ENCODE measurements at regions of chr10 and their contacts with region 1.

Region 1: DNA sequence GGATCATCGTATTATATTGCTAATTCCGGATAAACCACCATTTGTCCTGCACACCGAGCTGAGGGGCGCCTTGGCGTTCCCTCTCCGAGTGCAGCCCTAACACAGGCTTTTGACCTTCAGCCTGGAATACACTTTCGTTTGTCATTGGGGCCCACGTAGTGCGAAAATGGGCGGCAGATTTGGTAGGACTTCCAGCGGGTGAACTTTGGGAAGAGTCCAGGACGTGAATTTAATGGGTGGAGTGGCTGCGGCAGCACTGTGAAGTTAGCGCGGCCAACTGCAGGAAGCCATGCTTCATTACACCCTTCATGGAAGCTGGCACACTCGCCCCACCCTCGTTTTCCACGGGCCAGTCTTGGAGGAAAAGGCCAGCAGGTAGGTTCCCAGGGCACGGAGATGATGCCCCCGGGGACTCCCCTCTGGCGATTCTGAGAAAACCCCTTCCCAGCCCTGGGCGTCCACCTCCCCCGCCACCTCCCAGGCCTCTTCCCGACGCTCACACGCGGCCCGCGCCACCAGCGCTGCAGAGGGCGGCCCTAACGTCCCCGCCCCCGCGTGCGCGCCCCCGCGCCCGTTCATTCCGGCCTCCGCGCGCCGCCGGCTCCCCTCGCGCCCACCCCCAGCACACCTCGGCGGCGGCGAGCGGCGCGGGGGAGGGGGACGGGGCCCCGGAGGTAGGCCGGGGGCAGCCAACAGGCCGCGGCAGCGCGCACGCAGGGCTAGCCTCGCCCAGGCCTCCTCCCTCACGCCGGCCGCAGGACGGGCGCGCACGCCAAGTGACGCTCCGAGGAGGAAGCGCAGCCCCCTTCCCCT is at the start of gene MLLT10:
- DNase-seq: peak; percentile 98
- H3K4me3 ChIP-seq: peak within 1 kb of the TSS; percentile 72
- H3K27ac ChIP-seq: peak within 1 kb of the TSS; percentile 70
- H3K4me1 ChIP-seq: peaks cover 24% of the 10 kb centered on the region
- CTCF ChIP-seq: no peak
- total RNA-seq, gene MLLT10: 50.4 and 68.4 TPM in 2 replicates

Region 2: DNA sequence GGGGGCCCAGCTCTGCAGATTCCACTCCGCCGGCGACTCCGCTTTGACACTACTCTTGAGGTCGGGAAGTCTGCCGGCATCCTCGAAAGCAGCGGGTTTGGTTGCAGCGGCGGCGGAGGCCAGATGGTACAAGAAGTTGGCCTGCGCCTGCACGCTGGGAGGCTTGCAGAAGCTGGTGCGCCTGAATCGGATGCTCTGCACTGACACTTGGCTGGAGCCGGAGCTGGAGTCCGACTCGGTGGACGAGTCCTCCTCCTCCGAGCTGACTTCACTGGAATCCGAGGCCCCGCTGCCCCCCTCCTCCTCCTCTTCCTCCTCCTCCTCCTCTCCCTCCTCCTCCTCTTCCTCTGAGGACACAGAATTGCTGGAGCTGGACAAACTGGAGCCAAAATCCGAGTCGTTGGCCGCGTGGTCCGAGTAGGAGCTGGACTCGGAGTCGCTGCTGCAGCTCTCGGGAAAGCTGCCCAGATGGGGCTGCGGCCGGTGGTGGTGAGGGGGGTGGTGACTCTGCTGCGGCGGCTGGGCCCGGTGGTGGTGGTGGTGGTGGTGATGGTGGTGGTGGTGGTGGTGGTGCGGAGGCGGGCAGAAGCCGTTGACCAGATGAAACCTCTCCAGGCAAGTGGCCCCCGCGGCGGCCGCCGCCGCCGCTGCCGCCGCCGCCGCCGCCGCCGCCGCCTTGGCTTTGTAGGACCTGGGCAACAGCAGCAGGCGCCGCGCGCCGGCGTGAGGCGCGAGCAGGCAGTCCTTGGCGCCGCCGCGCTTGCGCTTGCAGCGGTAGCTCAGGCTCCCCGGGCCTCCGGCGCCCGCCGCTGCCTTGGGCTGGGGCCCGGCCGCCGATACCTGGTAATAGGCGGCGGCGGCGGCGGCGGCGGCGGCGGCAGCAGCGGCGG is 17.2 kb before region 1 on chr10:
- CTCF ChIA-PET with region 1: no interaction called
- POLR2A ChIA-PET with region 1: interaction called, 11 read pairs
- intact Hi-C with region 1: no loop called
- DNase-seq: peak; percentile 67
- H3K4me3 ChIP-seq: peak overlapping the region; percentile 70
- H3K27ac ChIP-seq: no peak overlapping the region
- H3K4me1 ChIP-seq: peaks cover 27% of the 10 kb centered on the region
- CTCF ChIP-seq: no peak

Region 3: GRCh38 chr10:21552638-21553037 is 19.0 kb after region 1 on chr10:
- CTCF ChIA-PET with region 1: no interaction called
- POLR2A ChIA-PET with region 1: interaction called, 11 read pairs
- intact Hi-C with region 1: no loop called
- DNase-seq: no peak
- H3K4me3 ChIP-seq: no peak overlapping the region
- H3K27ac ChIP-seq: no peak overlapping the region
- H3K4me1 ChIP-seq: no peaks in the 10 kb centered on the region
- CTCF ChIP-seq: no peak

Measured in OCI-LY7 (cell line).